ENCODE measurements at regions of chr3 and their contacts with region 1.

Region 1: DNA sequence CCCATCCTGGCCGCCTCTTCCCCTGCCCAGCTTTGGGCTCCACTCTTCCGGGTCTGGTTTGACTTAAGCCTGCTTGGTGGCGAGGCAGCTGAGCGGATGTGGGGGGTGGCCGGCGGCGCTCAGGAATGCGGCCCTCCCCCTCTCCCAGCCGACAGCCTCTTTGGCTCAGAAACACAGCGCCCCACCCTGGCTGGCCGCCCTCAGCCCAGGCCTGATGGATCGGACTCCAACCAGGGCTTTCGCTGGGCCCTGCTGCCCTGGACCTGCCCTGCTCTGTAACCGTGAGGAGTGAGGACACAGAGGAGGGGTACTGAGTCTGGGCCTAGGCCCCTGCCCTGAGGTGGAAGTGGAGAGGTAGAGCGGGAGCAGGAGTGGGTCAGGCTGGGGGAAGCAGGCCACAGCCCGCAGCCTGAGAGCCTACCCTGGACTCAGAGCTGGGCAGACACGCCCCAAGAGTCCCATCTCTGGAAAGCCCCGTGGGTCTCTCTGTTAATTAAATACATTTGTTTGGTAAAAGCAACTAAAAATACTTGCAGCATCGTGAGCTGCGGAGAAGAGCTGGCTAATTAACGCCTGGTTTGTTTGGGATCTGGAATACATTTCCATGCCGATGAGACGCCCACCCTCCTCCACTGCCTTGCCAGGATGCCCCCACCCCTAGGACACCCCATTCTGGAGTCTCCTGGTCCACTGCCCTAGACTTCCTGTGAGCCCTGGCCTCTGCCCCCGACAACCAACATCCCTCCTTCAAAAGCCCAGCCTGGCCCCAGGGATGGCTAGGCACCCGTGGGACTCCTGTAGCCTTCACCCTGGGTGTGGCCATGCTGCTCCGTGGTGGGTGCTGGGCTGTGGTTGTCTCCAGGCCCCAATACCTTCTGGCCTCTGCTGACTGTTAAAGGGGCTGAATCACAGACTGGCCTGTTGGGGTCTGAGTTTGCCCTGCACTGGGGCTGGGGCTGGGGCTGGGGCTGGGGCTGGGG is 19.6 kb downstream of the PLXNA1 start:
- DNase-seq: peak; percentile 68
- H3K4me3 ChIP-seq: peak overlapping the region; percentile 9; the same call in 1 of the 2 replicates
- H3K27me3 ChIP-seq: no peaks in the 10 kb centered on the region
- CTCF ChIP-seq: peak; percentile 72

Region 2: GRCh38 chr3:126990890-126991289 is 11.6 kb before region 1 on chr3:
- CTCF ChIA-PET with region 1: interaction called, 22 read pairs
- POLR2A ChIA-PET with region 1: no interaction called
- DNase-seq: no peak
- H3K4me3 ChIP-seq: no peak overlapping the region
- H3K27me3 ChIP-seq: no peaks in the 10 kb centered on the region
- CTCF ChIP-seq: no peak